Naive thymus-derived CD4-positive, alpha-beta T cell (primary cell): ENCODE measurements at regions of chr17 and their contacts with region 1.

Region 1: GRCh38 chr17:76681222-76682137 is 29.3 kb downstream of the MXRA7 start:
- DNase-seq: peak; percentile 37 to 78 (median 67)
- ATAC-seq: peak; percentile 80
- H3K4me3 ChIP-seq: no peak overlapping the region
- H3K4me3 Mint-ChIP-seq: no peak overlapping the region
- H3K27ac ChIP-seq: no peak overlapping the region
- H3K27ac Mint-ChIP-seq: peak overlapping the region in 4 of 9 donors; percentile 18 to 74 (median 28)
- H3K4me1 ChIP-seq: peaks cover 14 to 25% of the 10 kb centered on the region in 2 donors
- H3K4me1 Mint-ChIP-seq: peaks cover 0 to 12% (median 5%) of the 10 kb centered on the region in 7 donors
- H3K27me3 ChIP-seq: no peaks in the 10 kb centered on the region
- H3K27me3 Mint-ChIP-seq: peaks cover 0 to 6% (median 0%) of the 10 kb centered on the region in 5 donors

Region 2: GRCh38 chr17:76523084-76524037 is 158.1 kb before region 1 on chr17:
- CTCF ChIA-PET with region 1: interaction called, 20 read pairs
- POLR2A ChIA-PET with region 1: no interaction called
- intact Hi-C with region 1: loop called (anchors 1 kb)
- DNase-seq: peak; percentile 66 to 89 (median 79)
- ATAC-seq: peak; percentile 92
- H3K4me3 ChIP-seq: no peak overlapping the region
- H3K4me3 Mint-ChIP-seq: peak overlapping the region in 8 of 10 donors; percentile 10 to 71 (median 36)
- H3K27ac ChIP-seq: no peak overlapping the region
- H3K27ac Mint-ChIP-seq: peak overlapping the region in 8 of 9 donors; percentile 40 to 93 (median 72)
- H3K4me1 ChIP-seq: peaks cover 11 to 22% of the 10 kb centered on the region in 2 donors
- H3K4me1 Mint-ChIP-seq: peaks cover 16 to 31% (median 28%) of the 10 kb centered on the region in 7 donors
- H3K27me3 ChIP-seq: no peaks in the 10 kb centered on the region
- H3K27me3 Mint-ChIP-seq: peaks cover 0 to 11% (median 0%) of the 10 kb centered on the region in 5 donors

Region 3: GRCh38 chr17:76643553-76644148 is 37.8 kb before region 1 on chr17 and contains the start of gene ST6GALNAC1:
- CTCF ChIA-PET with region 1: interaction called, 3 read pairs
- POLR2A ChIA-PET with region 1: no interaction called
- intact Hi-C with region 1: loop called in 1 of 2 experiments (anchors 2 kb)
- DNase-seq: peak in 7 of 9 donors; percentile 38 to 74 (median 62)
- ATAC-seq: peak; percentile 73
- H3K4me3 ChIP-seq: peak within 1 kb of the TSS; percentile 32
- H3K4me3 Mint-ChIP-seq: peak within 1 kb of the TSS; percentile 66 to 89 (median 78)
- H3K27ac ChIP-seq: peak within 1 kb of the TSS; percentile 46
- H3K27ac Mint-ChIP-seq: peak within 1 kb of the TSS; percentile 51 to 93 (median 77)
- H3K4me1 ChIP-seq: peaks cover 0 to 16% of the 10 kb centered on the region in 2 donors
- H3K4me1 Mint-ChIP-seq: peaks cover 12 to 47% (median 33%) of the 10 kb centered on the region in 7 donors
- H3K27me3 ChIP-seq: no peaks in the 10 kb centered on the region
- H3K27me3 Mint-ChIP-seq: peaks cover 0 to 20% (median 0%) of the 10 kb centered on the region in 5 donors
- total RNA-seq, gene ST6GALNAC1: 1.4 to 5.8 (median 2.0) TPM

Region 4: DNA sequence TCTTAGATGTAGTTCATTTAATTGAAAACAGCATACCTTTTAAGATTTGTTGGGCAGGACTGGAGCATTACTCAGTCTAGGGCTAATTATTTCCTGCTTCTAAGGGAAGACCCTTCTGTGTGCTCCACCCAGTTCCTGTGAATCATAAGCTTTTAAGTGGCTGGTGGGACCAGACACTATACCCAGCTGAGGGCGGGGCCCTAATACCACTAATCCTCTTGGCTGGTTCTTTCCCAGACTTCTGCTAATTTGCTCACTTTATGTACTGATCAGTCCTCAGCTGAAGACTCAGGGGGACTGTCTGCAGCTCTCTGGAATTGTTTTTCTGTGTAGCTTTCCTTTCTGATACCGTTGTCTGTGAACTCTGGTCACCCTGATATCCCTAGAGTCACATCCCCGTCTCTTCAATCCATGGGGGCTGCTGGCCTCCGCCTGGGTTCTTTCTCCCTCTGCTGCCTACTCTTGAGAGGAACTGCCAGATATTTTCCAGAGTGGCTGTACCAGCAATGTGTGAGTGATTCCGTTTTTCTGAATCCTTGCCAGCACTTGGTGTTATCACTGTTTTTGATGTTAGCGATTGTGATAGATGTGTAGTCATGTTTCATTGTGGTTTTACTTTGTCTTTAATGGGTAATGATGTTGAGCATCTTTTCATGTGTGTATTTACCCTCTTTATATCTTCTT is 91.5 kb after region 1 on chr17:
- CTCF ChIA-PET with region 1: no interaction called
- POLR2A ChIA-PET with region 1: no interaction called
- intact Hi-C with region 1: no loop called
- DNase-seq: peak in 6 of 9 donors; percentile 2 to 33 (median 22)
- ATAC-seq: peak; percentile 94
- H3K4me3 ChIP-seq: peak overlapping the region; percentile 36
- H3K4me3 Mint-ChIP-seq: peak overlapping the region in 9 of 10 donors; percentile 30 to 82 (median 48)
- H3K27ac ChIP-seq: no peak overlapping the region
- H3K27ac Mint-ChIP-seq: peak overlapping the region; percentile 67 to 92 (median 82)
- H3K4me1 ChIP-seq: peaks cover 11 to 13% of the 10 kb centered on the region in 2 donors
- H3K4me1 Mint-ChIP-seq: peaks cover 15 to 25% (median 23%) of the 10 kb centered on the region in 7 donors
- H3K27me3 ChIP-seq: no peaks in the 10 kb centered on the region
- H3K27me3 Mint-ChIP-seq: no peaks in the 10 kb centered on the region

Region 5: GRCh38 chr17:76924345-76925342 is 243.2 kb after region 1 on chr17:
- CTCF ChIA-PET with region 1: no interaction called
- POLR2A ChIA-PET with region 1: no interaction called
- intact Hi-C with region 1: no loop called
- DNase-seq: no peak
- ATAC-seq: no peak
- H3K4me3 ChIP-seq: no peak overlapping the region
- H3K4me3 Mint-ChIP-seq: no peak overlapping the region
- H3K27ac ChIP-seq: no peak overlapping the region
- H3K27ac Mint-ChIP-seq: no peak overlapping the region
- H3K4me1 ChIP-seq: no peaks in the 10 kb centered on the region
- H3K4me1 Mint-ChIP-seq: no peaks in the 10 kb centered on the region
- H3K27me3 ChIP-seq: no peaks in the 10 kb centered on the region
- H3K27me3 Mint-ChIP-seq: peaks cover 0 to 5% (median 0%) of the 10 kb centered on the region in 5 donors